PC-3 (cell line): ENCODE measurements at regions of chr5 and their contacts with region 1.

Region 1: DNA sequence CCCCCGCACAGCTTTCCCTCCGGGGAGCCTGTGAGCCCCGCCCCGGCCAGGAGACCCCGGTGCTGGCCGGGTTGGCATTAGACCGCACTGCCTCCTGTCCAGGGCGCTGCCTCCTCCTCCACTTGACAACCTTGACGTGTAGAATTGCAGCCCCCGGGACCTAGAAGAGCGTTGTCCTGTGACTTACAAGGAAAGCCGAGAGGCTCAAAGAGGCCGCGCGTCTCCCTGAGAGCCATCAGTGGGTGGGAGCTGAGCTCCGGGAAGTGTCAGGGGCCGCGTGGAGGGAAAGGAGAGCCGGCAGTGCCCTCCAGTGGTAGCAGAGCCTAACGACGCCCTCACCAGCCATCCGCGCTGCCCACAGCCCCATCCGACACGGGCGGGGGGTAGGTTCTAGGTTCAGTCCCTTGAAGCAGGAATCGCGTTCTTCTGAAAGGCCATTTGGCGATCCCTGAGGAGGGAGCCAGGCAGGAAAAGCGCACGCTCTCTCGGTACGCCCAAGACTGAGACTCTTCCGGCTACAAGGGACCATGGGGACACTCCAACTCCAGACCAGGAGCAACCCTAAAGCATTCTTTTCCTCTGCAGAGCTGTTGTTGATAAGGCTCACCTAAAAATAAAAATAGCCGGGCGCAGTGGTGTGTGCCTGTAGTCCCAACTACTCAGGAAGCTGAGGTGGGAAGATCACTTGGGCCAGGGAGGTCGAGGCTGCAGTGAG is 40.6 kb upstream of the SAP30L start:
- DNase-seq: peak; percentile 80
- ATAC-seq: peak; percentile 83
- H3K4me3 ChIP-seq: peak overlapping the region; percentile 61
- H3K27ac ChIP-seq: peak overlapping the region; percentile 54
- H3K4me1 ChIP-seq: peaks cover 23% of the 10 kb centered on the region
- H3K27me3 ChIP-seq: no peaks in the 10 kb centered on the region
- CTCF ChIP-seq: peak; percentile 74

Region 2: DNA sequence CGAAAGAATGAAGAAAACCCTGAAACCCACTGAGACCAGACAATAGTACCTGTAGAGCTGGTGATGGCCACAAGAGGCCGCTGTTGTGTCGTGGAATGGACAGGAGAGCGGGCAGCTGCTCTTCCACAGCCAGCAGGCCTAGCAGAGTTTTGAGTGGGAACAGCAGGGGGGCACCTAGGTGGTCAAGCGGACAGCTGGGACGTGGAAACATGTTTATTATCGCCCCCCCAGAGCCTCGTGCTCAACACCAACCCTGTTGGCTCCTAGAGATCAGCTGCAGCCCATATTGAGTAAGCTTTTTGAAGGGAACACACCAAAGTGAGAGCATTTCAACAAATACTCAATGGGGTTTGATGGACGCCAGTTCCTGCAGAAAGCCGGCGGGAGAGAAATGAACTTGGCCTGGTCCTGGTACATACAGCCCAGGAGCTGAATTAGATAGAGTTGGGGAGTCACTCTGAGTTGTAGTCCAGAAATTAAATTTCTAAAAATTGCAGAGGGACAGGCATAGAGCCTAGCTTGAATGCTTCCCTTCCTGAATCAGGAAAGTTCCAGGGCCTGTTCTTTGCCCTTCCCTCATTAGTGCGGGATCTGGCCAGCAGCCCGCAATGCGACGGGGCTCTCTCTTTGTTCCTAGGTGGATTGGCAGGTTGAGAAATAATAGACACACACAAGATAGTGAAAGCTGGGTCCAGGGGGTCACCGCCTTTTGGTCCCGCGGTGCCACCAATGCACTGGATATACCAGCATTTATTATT is 332.6 kb before region 1 on chr5:
- CTCF ChIA-PET with region 1: interaction called, 13 read pairs
- POLR2A ChIA-PET with region 1: no interaction called
- intact Hi-C with region 1: loop called (anchors 1 kb)
- DNase-seq: peak; percentile 80
- ATAC-seq: peak; percentile 97
- H3K4me3 ChIP-seq: peak overlapping the region; percentile 56
- H3K27ac ChIP-seq: no peak overlapping the region
- H3K4me1 ChIP-seq: peaks cover 3% of the 10 kb centered on the region
- H3K27me3 ChIP-seq: no peaks in the 10 kb centered on the region
- CTCF ChIP-seq: peak; percentile 90

Region 3: GRCh38 chr5:154197801-154198491 is 207.3 kb before region 1 on chr5:
- CTCF ChIA-PET with region 1: interaction called, 5 read pairs
- POLR2A ChIA-PET with region 1: no interaction called
- intact Hi-C with region 1: loop called (anchors 1 kb)
- DNase-seq: peak; percentile 94
- ATAC-seq: peak; percentile 70
- H3K4me3 ChIP-seq: peak overlapping the region; percentile 47; the same call in 1 of the 2 replicates
- H3K27ac ChIP-seq: peak overlapping the region; percentile 99
- H3K4me1 ChIP-seq: peaks cover 66% of the 10 kb centered on the region
- H3K27me3 ChIP-seq: no peaks in the 10 kb centered on the region
- CTCF ChIP-seq: no peak

Region 4: GRCh38 chr5:154334406-154335064 is 70.7 kb before region 1 on chr5:
- CTCF ChIA-PET with region 1: no interaction called
- POLR2A ChIA-PET with region 1: no interaction called
- intact Hi-C with region 1: loop called (anchors 10 kb)
- DNase-seq: no peak
- ATAC-seq: no peak
- H3K4me3 ChIP-seq: no peak overlapping the region
- H3K27ac ChIP-seq: no peak overlapping the region
- H3K4me1 ChIP-seq: no peaks in the 10 kb centered on the region
- H3K27me3 ChIP-seq: no peaks in the 10 kb centered on the region
- CTCF ChIP-seq: no peak

Region 5: DNA sequence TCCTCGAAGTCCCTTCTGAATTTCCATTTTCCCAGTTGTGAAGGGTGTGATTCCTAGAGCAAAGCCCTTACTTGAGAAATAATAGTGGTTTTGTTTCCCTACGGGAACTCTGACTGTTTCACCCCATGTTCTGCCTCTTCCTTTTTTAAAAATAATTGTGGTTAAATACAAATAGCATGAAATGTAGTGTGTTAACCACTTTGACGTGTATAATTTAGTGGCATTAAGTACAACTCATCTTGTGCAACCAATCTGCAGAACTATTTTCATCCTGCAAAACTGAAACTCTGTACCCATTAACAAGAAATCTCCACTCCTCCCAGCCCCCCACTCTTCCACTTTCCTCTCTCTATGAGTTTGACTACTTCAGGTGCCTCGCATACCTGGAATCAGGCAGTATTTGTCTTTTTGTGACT is 108.4 kb after region 1 on chr5:
- CTCF ChIA-PET with region 1: no interaction called
- POLR2A ChIA-PET with region 1: no interaction called
- intact Hi-C with region 1: no loop called
- DNase-seq: no peak
- ATAC-seq: no peak
- H3K4me3 ChIP-seq: no peak overlapping the region
- H3K27ac ChIP-seq: no peak overlapping the region
- H3K4me1 ChIP-seq: no peaks in the 10 kb centered on the region
- H3K27me3 ChIP-seq: peaks cover 3% of the 10 kb centered on the region; the same call in 1 of the 2 replicates
- CTCF ChIP-seq: no peak